Common myeloid progenitor, CD34-positive (primary cell): ENCODE measurements at regions of chr6 and their contacts with region 1.

Region 1: DNA sequence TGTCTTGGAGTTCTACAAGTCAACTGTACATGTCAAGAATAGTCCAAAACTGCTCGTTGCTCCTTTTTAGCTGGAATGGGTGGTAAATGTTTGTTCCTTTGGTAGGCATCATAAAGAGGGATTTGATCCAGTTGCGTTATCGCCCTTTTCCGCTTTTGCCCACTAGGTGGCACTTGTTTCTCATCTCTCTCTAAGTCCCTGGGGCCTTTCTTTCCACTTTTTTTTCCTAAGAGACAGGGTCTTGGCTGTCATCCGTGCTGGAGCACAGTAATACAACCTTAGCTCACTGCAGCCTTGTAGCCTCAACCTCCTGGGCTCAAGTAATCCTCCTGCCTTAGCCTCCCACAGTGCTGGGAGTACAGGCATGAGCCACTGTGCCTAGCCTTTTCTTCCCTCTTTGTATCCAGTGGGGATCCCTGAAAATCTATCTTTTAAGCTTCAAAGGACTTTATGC is 20.7 kb downstream of the GTPBP2 start:
- DNase-seq: peak; percentile 68 to 77 (median 70)
- H3K4me3 ChIP-seq: no peak overlapping the region
- H3K27ac ChIP-seq: no peak overlapping the region
- H3K4me1 ChIP-seq: peaks cover 0 to 5% (median 1%) of the 10 kb centered on the region in 4 experiments
- H3K27me3 ChIP-seq: no peaks in the 10 kb centered on the region

Region 2: DNA sequence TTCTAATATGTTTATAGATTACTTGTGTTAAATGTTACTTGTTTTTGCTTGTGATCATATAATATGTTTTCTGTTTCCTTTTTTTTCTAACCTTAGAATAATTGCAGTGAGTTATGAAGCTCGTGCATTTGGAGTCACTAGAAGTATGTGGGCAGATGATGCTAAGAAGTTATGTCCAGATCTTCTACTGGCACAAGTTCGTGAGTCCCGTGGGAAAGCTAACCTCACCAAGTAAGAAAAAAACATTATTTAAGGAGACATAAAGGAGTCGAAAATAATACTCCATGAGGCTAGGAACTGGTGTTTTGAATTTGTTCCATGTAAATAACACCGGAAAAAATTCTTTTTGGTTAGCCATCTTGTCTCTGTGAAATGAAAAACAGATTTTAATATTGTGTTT is 25.4 kb before region 1 on chr6:
- CTCF ChIA-PET with region 1: interaction called, 11 read pairs
- POLR2A ChIA-PET with region 1: no interaction called
- DNase-seq: no peak
- H3K4me3 ChIP-seq: no peak overlapping the region
- H3K27ac ChIP-seq: no peak overlapping the region
- H3K4me1 ChIP-seq: peaks cover 0 to 3% (median 0%) of the 10 kb centered on the region in 4 experiments
- H3K27me3 ChIP-seq: no peaks in the 10 kb centered on the region

Region 3: DNA sequence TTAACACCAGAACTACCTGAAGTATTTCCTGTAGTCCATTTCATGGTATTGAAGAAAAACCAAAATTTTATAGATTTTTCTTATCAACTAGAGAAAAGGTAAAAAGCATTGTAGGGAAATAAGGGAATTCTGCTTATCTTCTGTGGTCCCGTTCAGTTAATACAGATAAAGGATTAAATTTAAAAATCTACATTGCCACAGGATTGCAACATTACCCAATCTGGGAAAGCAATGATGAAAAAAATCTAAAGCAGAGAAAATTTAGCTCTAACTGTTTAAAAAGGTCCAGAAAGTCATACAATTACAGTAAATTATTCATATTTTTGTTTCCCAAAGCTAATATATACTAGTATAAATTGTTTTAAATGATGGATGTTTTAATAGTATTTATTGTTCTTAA is 14.4 kb before region 1 on chr6:
- CTCF ChIA-PET with region 1: interaction called, 10 read pairs
- POLR2A ChIA-PET with region 1: interaction called, 3 read pairs
- DNase-seq: no peak
- H3K4me3 ChIP-seq: no peak overlapping the region
- H3K27ac ChIP-seq: no peak overlapping the region
- H3K4me1 ChIP-seq: no peaks in the 10 kb centered on the region
- H3K27me3 ChIP-seq: no peaks in the 10 kb centered on the region

Region 4: GRCh38 chr6:43620801-43621428 is 12.6 kb after region 1 on chr6:
- CTCF ChIA-PET with region 1: interaction called, 27 read pairs
- POLR2A ChIA-PET with region 1: interaction called, 5 read pairs
- DNase-seq: no peak
- H3K4me3 ChIP-seq: no peak overlapping the region
- H3K27ac ChIP-seq: peak overlapping the region in 1 of 2 experiments; percentile 22
- H3K4me1 ChIP-seq: peaks cover 0 to 9% (median 6%) of the 10 kb centered on the region in 4 experiments
- H3K27me3 ChIP-seq: no peaks in the 10 kb centered on the region